CD4-positive, alpha-beta T cell (primary cell): ENCODE measurements at regions of chr15 and their contacts with region 1.

Region 1: GRCh38 chr15:74906446-74907162 is at the start of gene FAM219B:
- DNase-seq: peak; percentile 42 to 86 (median 64)
- ATAC-seq: peak; percentile 72
- H3K4me3 ChIP-seq: peak within 1 kb of the TSS; percentile 95
- H3K4me3 Mint-ChIP-seq: peak within 1 kb of the TSS; percentile 99
- H3K27ac ChIP-seq: peak within 1 kb of the TSS; percentile 68 to 80
- H3K27ac Mint-ChIP-seq: peak within 1 kb of the TSS; percentile 99
- H3K4me1 ChIP-seq: peaks cover 38% of the 10 kb centered on the region
- H3K4me1 Mint-ChIP-seq: peaks cover 42% of the 10 kb centered on the region
- H3K27me3 ChIP-seq: no peaks in the 10 kb centered on the region
- H3K27me3 Mint-ChIP-seq: no peaks in the 10 kb centered on the region
- CTCF ChIP-seq: no peak
- total RNA-seq, gene FAM219B: 21.5 to 26.8 TPM

Region 2: DNA sequence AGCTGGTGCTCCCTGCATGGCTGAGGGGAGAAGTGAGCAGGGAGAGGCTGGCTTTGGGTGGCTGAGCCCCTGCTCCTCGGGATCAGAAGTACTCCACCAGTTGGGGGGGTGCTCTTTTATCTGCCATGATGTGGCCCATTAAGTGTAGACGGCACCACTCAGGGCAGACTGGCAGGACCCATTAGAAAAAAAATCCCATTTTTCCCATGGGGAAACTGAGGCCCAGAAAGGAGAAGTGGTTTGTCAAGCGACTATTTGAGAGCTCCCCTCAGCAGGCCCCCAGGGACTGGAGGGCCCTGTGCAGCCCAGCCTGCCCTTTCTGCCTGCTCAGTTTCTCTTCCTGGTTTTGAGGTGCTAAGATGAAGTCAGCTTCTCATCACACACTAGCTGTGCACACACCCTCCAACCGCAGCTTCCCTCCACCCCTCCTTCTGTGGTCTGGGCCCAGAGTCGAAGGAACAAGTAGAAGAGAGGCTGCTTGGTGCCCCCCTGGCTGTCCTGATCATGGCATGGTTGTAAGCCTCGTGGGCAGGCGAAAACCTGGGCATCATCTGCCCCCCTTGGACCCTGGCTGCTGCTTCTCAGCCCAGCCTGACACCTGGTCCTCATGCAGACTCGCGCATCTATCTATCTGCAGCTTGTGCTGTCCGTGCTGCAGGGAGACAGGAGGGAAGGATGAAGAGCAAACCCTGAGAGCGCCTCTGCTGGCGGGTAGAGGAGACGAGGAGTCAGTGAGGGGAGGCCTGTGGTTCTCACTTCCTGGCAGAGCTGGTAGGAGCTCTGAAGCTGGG is 119.2 kb before region 1 on chr15:
- CTCF ChIA-PET with region 1: interaction called, 6 read pairs
- POLR2A ChIA-PET with region 1: interaction called, 13 read pairs
- intact Hi-C with region 1: no loop called
- DNase-seq: peak; percentile 78 to 98 (median 84)
- ATAC-seq: peak; percentile 72
- H3K4me3 ChIP-seq: peak overlapping the region; percentile 100
- H3K4me3 Mint-ChIP-seq: peak overlapping the region; percentile 90
- H3K27ac ChIP-seq: peak overlapping the region; percentile 69 to 93
- H3K27ac Mint-ChIP-seq: peak overlapping the region; percentile 94
- H3K4me1 ChIP-seq: peaks cover 91% of the 10 kb centered on the region
- H3K4me1 Mint-ChIP-seq: peaks cover 71% of the 10 kb centered on the region
- H3K27me3 ChIP-seq: no peaks in the 10 kb centered on the region
- H3K27me3 Mint-ChIP-seq: no peaks in the 10 kb centered on the region
- CTCF ChIP-seq: peak; percentile 83

Region 3: GRCh38 chr15:74873036-74873755 is 33.4 kb before region 1 on chr15 and contains the start of gene SCAMP2:
- CTCF ChIA-PET with region 1: interaction called, 8 read pairs
- POLR2A ChIA-PET with region 1: interaction called, 6 read pairs
- intact Hi-C with region 1: loop called in 1 of 2 experiments (anchors 2 kb)
- DNase-seq: peak; percentile 79 to 95 (median 86)
- ATAC-seq: peak; percentile 90
- H3K4me3 ChIP-seq: peak within 1 kb of the TSS; percentile 65
- H3K4me3 Mint-ChIP-seq: peak within 1 kb of the TSS; percentile 94
- H3K27ac ChIP-seq: peak within 1 kb of the TSS; percentile 93 to 94
- H3K27ac Mint-ChIP-seq: peak within 1 kb of the TSS; percentile 90
- H3K4me1 ChIP-seq: peaks cover 50% of the 10 kb centered on the region
- H3K4me1 Mint-ChIP-seq: peaks cover 45% of the 10 kb centered on the region
- H3K27me3 ChIP-seq: no peaks in the 10 kb centered on the region
- H3K27me3 Mint-ChIP-seq: no peaks in the 10 kb centered on the region
- CTCF ChIP-seq: no peak
- total RNA-seq, gene SCAMP2: 56.1 to 56.9 TPM

Region 4: DNA sequence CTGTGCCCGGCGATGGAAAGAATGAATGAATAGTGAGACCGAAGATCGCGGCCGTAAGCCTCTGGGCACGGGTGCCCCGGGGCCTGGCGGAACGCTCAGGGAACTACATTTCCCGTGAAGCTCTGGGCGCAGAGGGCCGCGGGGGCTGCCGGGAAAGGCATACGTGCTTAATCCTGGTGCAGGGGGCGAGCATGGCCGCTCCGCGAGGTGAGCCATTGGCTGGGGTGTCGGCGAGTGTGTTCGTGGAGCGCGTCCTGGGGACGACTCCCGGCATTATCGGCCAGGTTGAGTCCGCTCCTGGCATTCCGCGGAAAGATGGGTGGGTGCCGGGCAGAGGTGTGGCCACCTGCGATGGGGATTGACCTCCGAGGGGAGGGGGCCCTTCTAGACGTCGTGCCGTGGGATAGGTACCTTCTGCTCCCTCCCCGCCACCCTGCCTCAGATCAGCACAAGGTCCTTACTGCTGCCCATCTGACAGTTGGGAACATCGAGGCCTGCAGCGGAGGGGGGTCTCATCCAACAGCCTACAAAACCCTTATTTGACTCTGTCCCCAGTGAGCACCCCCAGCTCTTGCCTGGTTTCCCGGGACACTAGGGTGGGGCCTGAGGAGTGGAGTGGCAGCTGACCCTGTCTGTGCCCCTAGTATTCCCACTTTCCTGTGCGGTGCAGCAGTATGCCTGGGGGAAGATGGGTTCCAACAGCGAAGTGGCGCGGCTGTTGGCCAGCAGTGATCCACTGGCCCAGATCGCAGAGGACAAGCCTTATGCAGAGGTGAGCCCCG is 16.5 kb before region 1 on chr15 and contains the start of gene MPI:
- CTCF ChIA-PET with region 1: interaction called, 8 read pairs
- POLR2A ChIA-PET with region 1: interaction called, 21 read pairs
- intact Hi-C with region 1: no loop called
- DNase-seq: peak; percentile 70 to 90 (median 78)
- ATAC-seq: peak; percentile 92
- H3K4me3 ChIP-seq: peak within 1 kb of the TSS; percentile 92
- H3K4me3 Mint-ChIP-seq: peak within 1 kb of the TSS; percentile 88
- H3K27ac ChIP-seq: peak within 1 kb of the TSS; percentile 71 to 89
- H3K27ac Mint-ChIP-seq: peak within 1 kb of the TSS; percentile 86
- H3K4me1 ChIP-seq: peaks cover 56% of the 10 kb centered on the region
- H3K4me1 Mint-ChIP-seq: peaks cover 43% of the 10 kb centered on the region
- H3K27me3 ChIP-seq: no peaks in the 10 kb centered on the region
- H3K27me3 Mint-ChIP-seq: no peaks in the 10 kb centered on the region
- CTCF ChIP-seq: no peak
- total RNA-seq, gene MPI: 28.9 to 30.3 TPM

Region 5: GRCh38 chr15:74950078-74951000 is 43.7 kb after region 1 on chr15:
- CTCF ChIA-PET with region 1: interaction called, 7 read pairs
- POLR2A ChIA-PET with region 1: no interaction called
- intact Hi-C with region 1: loop called in 1 of 2 experiments (anchors 5 kb)
- DNase-seq: peak; percentile 58 to 87 (median 76)
- ATAC-seq: peak; percentile 96
- H3K4me3 ChIP-seq: no peak overlapping the region
- H3K4me3 Mint-ChIP-seq: no peak overlapping the region
- H3K27ac ChIP-seq: no peak overlapping the region
- H3K27ac Mint-ChIP-seq: no peak overlapping the region
- H3K4me1 ChIP-seq: peaks cover 4% of the 10 kb centered on the region
- H3K4me1 Mint-ChIP-seq: peaks cover 5% of the 10 kb centered on the region
- H3K27me3 ChIP-seq: peaks cover 0 to 6% of the 10 kb centered on the region in 2 experiments
- H3K27me3 Mint-ChIP-seq: no peaks in the 10 kb centered on the region
- CTCF ChIP-seq: peak; percentile 97

Region 6: DNA sequence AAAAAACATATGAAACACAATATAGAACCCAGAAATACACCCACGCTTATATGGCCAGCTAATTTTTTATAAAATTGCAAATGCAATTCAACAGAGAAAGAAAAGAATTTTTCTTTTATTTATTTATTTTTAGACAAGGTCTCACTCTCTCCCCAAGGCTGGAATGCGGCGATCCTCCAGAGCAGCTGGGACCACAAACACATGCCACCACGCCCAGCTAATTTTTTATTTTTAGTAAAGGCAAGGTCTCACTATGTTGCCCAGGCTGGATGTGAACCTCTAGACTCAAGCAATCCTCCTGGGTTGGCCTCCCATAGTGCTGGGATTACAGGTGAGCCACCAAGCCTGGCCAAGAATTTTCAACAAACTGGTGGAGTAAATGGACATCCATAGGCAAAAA is 1880.7 kb after region 1 on chr15:
- CTCF ChIA-PET with region 1: no interaction called
- POLR2A ChIA-PET with region 1: no interaction called
- intact Hi-C with region 1: no loop called
- DNase-seq: no peak
- ATAC-seq: no peak
- H3K4me3 ChIP-seq: no peak overlapping the region
- H3K4me3 Mint-ChIP-seq: no peak overlapping the region
- H3K27ac ChIP-seq: no peak overlapping the region
- H3K27ac Mint-ChIP-seq: no peak overlapping the region
- H3K4me1 ChIP-seq: no peaks in the 10 kb centered on the region
- H3K4me1 Mint-ChIP-seq: no peaks in the 10 kb centered on the region
- H3K27me3 ChIP-seq: no peaks in the 10 kb centered on the region
- H3K27me3 Mint-ChIP-seq: no peaks in the 10 kb centered on the region
- CTCF ChIP-seq: no peak